CD4-positive, alpha-beta memory T cell (primary cell): ENCODE measurements at regions of chr2 and their contacts with region 1.

Region 1: GRCh38 chr2:240513549-240514287 is 44.1 kb downstream of the ANKMY1 start:
- DNase-seq: peak; percentile 78 to 89 (median 80)
- H3K4me3 ChIP-seq: no peak overlapping the region
- H3K4me3 Mint-ChIP-seq: peak overlapping the region in 3 of 8 donors; percentile 2 to 73 (median 12)
- H3K27ac ChIP-seq: peak overlapping the region; percentile 17
- H3K27ac Mint-ChIP-seq: peak overlapping the region; percentile 16 to 95 (median 87)
- H3K4me1 ChIP-seq: peaks cover 13% of the 10 kb centered on the region
- H3K4me1 Mint-ChIP-seq: peaks cover 7 to 12% (median 11%) of the 10 kb centered on the region in 4 donors
- H3K27me3 ChIP-seq: no peaks in the 10 kb centered on the region
- H3K27me3 Mint-ChIP-seq: no peaks in the 10 kb centered on the region

Region 2: DNA sequence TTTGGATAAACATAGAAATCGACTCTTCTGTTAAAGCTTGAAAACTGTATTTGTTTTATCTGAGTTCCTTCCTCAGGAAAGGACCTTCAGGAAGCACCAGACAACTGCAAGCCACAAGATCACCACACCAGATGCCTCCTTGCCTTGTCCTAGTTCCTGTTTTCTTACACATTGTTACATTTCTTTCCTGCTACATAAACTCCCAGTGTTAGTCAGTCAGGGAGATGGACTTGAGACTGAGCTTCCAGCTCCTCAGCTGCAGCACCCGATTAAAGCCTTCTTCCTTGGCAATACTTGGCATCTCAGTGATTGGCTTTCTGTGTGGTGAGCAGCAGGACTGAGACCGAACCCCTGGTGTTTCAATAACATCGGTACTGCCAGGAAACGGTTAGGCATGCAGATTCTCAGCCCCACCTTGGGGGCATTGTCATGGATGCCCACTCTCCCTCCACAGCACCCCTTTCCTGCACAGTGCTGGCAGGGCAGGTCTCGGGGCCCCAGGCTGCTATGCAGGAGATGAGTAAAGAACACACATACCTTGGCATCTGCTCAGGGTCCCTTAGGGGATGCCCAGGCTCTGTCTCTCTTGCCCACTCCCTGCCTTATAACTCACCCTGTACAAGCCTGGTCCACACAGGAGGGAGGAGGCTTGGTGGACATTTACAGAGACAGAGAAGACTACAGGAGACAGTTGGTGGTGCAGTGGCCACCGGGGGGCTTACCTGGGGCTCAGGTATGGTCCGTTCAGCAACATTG is 11.4 kb after region 1 on chr2:
- CTCF ChIA-PET with region 1: interaction called, 11 read pairs
- POLR2A ChIA-PET with region 1: no interaction called
- intact Hi-C with region 1: no loop called
- DNase-seq: no peak
- H3K4me3 ChIP-seq: no peak overlapping the region
- H3K4me3 Mint-ChIP-seq: no peak overlapping the region
- H3K27ac ChIP-seq: no peak overlapping the region
- H3K27ac Mint-ChIP-seq: no peak overlapping the region
- H3K4me1 ChIP-seq: no peaks in the 10 kb centered on the region
- H3K4me1 Mint-ChIP-seq: peaks cover 0 to 13% (median 7%) of the 10 kb centered on the region in 4 donors
- H3K27me3 ChIP-seq: no peaks in the 10 kb centered on the region
- H3K27me3 Mint-ChIP-seq: peaks cover 0 to 1% of the 10 kb centered on the region in 2 donors

Region 3: DNA sequence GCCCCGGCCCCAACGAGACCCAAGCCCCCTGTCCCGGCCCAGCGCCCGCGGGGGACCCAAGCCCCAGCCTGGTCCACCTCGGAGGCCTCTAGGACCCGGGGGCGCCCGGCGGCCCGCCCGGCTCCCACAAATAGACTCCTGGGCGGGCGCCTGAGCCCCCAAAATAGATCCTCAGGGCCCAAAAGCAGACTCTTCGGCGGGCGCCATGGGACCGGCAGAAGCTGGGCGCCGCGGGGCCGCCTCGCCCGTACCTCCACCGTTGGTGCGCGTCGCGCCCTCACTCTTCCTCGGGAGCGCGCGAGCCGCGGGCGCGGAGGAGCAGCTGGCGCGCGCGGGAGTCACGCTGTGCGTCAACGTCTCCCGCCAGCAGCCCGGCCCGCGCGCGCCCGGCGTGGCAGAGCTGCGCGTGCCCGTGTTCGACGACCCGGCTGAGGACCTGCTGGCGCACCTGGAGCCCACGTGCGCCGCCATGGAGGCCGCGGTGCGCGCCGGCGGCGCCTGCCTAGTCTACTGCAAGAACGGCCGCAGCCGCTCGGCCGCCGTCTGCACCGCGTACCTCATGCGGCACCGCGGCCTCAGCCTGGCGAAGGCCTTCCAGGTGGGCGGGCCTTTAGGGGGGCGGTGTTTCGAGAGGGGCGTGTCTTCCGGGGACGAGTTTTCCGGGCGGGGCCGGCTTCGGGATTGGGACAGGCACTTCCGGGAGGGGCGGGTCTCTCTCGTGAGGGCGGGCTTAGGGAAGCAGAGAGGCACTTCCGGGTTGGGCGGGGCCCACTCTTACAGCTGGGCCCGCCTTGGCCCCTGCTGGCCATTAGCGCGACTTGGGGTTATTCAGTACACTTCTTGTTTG is 47.0 kb after region 1 on chr2:
- CTCF ChIA-PET with region 1: interaction called, 32 read pairs
- POLR2A ChIA-PET with region 1: interaction called, 33 read pairs
- intact Hi-C with region 1: loop called (anchors 2 kb)
- DNase-seq: peak; percentile 99 to 100 (median 99)
- H3K4me3 ChIP-seq: peak overlapping the region; percentile 54 to 90
- H3K4me3 Mint-ChIP-seq: peak overlapping the region; percentile 84 to 91 (median 88)
- H3K27ac ChIP-seq: peak overlapping the region; percentile 86
- H3K27ac Mint-ChIP-seq: peak overlapping the region; percentile 86 to 99 (median 94)
- H3K4me1 ChIP-seq: peaks cover 85% of the 10 kb centered on the region
- H3K4me1 Mint-ChIP-seq: peaks cover 47 to 84% (median 67%) of the 10 kb centered on the region in 4 donors
- H3K27me3 ChIP-seq: no peaks in the 10 kb centered on the region
- H3K27me3 Mint-ChIP-seq: no peaks in the 10 kb centered on the region

Region 4: DNA sequence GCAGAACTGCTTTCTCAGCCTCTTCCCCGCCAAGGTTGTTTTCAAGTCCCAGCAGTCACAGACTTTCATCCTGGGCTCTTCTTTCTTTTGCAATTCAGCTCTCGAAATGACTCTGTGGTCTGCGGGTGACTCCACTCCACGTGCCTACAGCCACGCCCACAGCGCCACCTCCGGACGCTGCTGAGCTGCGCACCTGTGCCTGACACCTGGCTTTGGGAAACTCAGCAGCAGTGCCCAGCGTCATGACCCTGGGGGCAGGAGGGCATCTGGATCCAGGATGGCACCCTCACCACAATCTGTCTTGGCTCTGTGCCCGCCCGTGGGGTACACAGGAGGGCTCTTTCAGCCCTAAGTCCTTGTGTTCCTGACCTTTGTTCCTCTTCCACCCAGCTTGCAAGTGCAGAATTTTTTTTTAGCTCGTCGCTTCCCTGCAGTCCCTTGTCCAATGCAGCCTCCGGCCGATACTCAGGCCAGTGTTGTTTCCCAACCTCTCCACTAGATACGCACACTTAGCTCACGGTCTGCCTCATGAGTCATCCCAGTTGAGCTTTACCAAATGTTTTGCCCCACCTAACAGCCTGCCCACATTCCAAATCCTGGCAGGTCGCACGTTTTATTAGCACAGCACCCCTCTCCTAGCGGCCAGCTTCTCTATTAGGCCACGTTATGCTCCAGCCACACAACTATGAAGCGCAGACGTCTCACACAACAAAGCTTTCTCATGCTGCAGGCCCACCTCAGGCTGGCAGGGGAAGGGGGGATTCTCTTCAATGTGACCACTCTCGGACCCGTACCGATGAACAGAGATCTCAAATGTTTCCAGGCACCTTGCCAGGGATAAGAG is 66.3 kb after region 1 on chr2:
- CTCF ChIA-PET with region 1: interaction called, 57 read pairs
- POLR2A ChIA-PET with region 1: interaction called, 14 read pairs
- intact Hi-C with region 1: loop called (anchors 1 kb)
- DNase-seq: peak; percentile 83 to 89 (median 85)
- H3K4me3 ChIP-seq: peak overlapping the region in 1 of 2 donors; percentile 8
- H3K4me3 Mint-ChIP-seq: peak overlapping the region; percentile 5 to 70 (median 47)
- H3K27ac ChIP-seq: peak overlapping the region; percentile 30
- H3K27ac Mint-ChIP-seq: peak overlapping the region; percentile 74 to 93 (median 88)
- H3K4me1 ChIP-seq: peaks cover 34% of the 10 kb centered on the region
- H3K4me1 Mint-ChIP-seq: peaks cover 19 to 50% (median 36%) of the 10 kb centered on the region in 4 donors
- H3K27me3 ChIP-seq: no peaks in the 10 kb centered on the region
- H3K27me3 Mint-ChIP-seq: no peaks in the 10 kb centered on the region

Region 5: GRCh38 chr2:240624950-240625621 is 111.4 kb after region 1 on chr2 and contains the start of gene GPR35:
- CTCF ChIA-PET with region 1: interaction called, 13 read pairs
- POLR2A ChIA-PET with region 1: no interaction called
- intact Hi-C with region 1: no loop called
- DNase-seq: peak; percentile 74 to 96 (median 80)
- H3K4me3 ChIP-seq: no peak within 1 kb of the TSS
- H3K4me3 Mint-ChIP-seq: peak within 1 kb of the TSS; percentile 61 to 79 (median 68)
- H3K27ac ChIP-seq: peak within 1 kb of the TSS; percentile 81
- H3K27ac Mint-ChIP-seq: peak within 1 kb of the TSS; percentile 90 to 96 (median 95)
- H3K4me1 ChIP-seq: peaks cover 88% of the 10 kb centered on the region
- H3K4me1 Mint-ChIP-seq: peaks cover 34 to 70% (median 44%) of the 10 kb centered on the region in 4 donors
- H3K27me3 ChIP-seq: no peaks in the 10 kb centered on the region
- H3K27me3 Mint-ChIP-seq: no peaks in the 10 kb centered on the region
- total RNA-seq, gene GPR35: 6.3 to 6.8 TPM

Region 6: DNA sequence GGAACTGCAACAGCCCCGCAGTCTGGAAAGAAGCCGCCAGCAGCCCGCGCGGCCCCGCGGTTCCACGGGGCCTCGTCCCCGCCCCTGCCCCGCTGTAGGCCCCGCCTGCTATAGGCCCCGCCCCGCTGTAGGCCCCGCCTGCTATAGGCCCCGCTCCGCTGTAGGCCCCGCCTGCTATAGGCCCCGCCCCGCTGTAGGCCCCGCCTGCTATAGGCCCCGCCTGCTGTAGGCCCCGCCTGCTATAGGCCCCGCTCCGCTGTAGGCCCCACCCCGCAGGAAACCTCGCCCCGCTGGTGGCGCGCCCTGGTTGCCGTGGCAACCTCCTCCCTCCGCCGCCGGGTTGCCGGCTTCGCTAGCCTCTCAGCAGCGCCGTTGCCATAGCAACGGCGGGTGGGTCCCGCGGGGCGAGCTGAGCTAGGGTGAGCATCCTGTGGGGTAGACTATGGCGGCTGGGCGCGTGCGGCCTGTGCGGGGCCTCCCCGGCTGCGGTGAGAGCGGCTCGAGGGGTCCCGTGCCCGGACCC is 318.5 kb after region 1 on chr2:
- CTCF ChIA-PET with region 1: interaction called, 5 read pairs
- POLR2A ChIA-PET with region 1: no interaction called
- intact Hi-C with region 1: loop called (anchors 5 kb)
- DNase-seq: peak; percentile 98 to 99 (median 99)
- H3K4me3 ChIP-seq: peak overlapping the region; percentile 34 to 36
- H3K4me3 Mint-ChIP-seq: peak overlapping the region in 6 of 8 donors; percentile 12 to 81 (median 66)
- H3K27ac ChIP-seq: no peak overlapping the region
- H3K27ac Mint-ChIP-seq: peak overlapping the region in 3 of 7 donors; percentile 55 to 91 (median 82)
- H3K4me1 ChIP-seq: peaks cover 12% of the 10 kb centered on the region
- H3K4me1 Mint-ChIP-seq: peaks cover 0 to 6% (median 3%) of the 10 kb centered on the region in 4 donors
- H3K27me3 ChIP-seq: peaks cover 10% of the 10 kb centered on the region
- H3K27me3 Mint-ChIP-seq: peaks cover 8 to 16% of the 10 kb centered on the region in 2 donors